Left cardiac atrium (tissue), 4 donors: ENCODE measurements at regions of chr4 and their contacts with region 1.

Region 1: DNA sequence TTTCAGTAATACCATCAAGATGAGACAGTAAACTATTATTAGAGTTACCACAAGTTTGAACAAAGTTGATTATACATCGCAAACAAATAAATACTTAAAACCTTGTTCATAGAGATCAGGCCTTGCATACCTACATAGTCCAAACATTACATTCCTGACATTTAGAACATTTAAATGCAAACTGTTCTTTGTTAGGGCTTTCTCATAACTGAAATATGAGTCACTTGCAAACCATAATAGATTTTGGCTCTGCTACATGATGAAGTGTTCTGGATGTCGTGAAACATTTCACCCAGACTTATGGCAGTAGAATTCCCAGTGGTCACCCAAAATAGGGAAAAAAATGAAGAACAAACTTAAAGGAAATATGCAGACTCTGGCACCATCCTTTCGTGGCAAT is 75.0 kb downstream of the FAT4 start:
- DNase-seq: no peak
- ATAC-seq: peak; percentile 71 to 80

Region 2: DNA sequence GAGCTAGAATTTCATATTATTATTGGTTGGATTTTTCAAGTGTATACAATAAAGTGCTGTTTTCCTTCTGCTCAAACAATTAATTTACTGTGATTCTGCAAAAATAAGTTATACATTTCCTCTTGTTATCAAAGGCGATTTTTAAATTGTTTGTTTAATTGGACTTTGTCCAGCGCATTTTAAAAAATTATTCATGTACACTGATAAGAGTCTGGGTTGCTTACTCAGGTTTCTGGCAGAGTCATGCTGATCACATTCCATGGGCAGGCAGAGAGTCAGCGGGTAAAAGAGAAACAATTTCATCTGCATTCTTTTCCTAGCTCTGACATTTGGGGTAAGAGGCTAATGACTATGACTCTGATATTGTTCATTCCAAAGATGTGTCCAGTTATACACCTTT is 66.1 kb before region 1 on chr4:
- intact Hi-C with region 1: loop called in 1 of 2 experiments (anchors 10 kb)
- DNase-seq: no peak
- ATAC-seq: peak; percentile 77 to 84